ENCODE measurements at regions of chr11 and their contacts with region 1.

Region 1: DNA sequence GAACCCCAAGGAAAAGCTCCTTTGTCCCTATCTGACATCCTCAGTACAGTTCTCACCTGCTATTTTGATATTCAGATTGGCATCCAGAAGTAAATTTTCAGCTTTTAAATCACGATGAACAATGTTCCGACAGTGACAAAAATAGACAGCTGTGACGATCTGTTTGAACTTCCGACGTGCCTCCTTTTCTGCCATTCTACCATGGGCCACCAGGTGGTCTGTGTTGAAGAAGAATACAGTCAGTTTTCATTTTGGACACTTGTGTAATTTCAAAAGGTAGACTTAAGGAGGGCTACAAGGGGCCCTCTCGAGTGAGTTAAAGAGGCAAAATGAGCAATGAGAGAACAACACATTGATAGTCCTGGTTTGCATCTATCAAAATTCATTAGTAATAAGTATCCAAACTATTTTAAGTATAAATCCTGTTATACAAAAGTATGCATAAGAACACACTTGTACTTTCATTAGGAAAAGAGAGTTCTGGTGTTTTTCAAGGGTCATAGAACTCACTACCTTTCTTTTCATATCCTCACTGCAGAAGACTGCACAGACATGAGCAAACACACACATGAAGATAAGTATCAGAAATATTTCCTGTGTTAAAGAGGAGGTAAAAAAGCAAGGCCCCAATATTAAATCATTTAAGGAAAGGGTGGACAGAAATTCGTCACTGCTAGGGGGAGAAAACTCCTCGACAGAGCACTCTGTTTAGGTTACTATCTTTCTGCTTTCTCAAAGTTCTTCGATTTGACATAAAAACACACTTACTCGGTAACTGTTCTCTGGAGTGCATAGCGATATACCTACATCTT is 89.9 kb upstream of the APOA1 start:
- DNase-seq: peak in 34 of 35 experiments; percentile 20 to 75 (median 52)
- ATAC-seq: peak in 3 of 4 experiments; percentile 20 to 38 (median 31)
- H3K4me3 ChIP-seq: no peak overlapping the region
- H3K4me3 Mint-ChIP-seq: peak overlapping the region; percentile 39 to 66 (median 45)
- H3K27ac ChIP-seq: peak overlapping the region; percentile 96
- H3K27ac Mint-ChIP-seq: peak overlapping the region; percentile 97
- H3K4me1 ChIP-seq: peaks cover 65 to 71% of the 10 kb centered on the region in 2 experiments
- H3K4me1 Mint-ChIP-seq: peaks cover 81 to 92% (median 87%) of the 10 kb centered on the region in 3 donors
- H3K27me3 ChIP-seq: no peaks in the 10 kb centered on the region
- H3K27me3 Mint-ChIP-seq: no peaks in the 10 kb centered on the region

Region 2: DNA sequence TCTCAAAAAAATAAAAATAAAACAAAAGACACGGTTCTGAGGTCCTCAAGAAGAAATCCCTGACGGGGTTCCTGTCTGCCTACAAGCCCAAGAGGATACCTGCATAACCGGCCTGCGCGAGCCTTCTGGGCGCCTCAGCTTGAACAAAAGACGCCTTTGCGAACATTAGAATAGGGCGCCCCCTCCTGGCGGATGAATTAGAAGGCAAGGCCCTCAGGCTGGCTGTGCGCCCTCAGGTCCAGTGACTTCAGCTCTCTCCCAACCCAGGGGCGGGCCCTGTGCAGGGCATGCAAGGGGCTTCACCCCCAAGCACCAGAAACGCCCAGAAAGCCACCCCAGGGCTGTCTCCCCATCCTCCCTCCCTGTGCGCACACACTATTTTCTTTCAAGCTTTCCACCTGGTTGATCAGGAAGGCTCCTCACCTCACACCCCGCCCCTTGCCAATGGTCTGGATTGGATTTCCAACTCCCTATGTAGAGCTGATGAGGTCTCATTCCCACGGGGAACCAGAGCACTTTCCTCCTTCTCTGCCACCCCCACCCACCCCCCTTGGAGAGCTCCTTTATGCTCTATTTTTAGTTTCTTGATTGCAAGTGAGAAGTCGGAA is 427.9 kb before region 1 on chr11:
- CTCF ChIA-PET with region 1: no interaction called
- POLR2A ChIA-PET with region 1: no interaction called
- DNase-seq: peak in 9 of 35 experiments; percentile 1 to 14 (median 5)
- ATAC-seq: no peak
- H3K4me3 ChIP-seq: no peak overlapping the region
- H3K4me3 Mint-ChIP-seq: no peak overlapping the region
- H3K27ac ChIP-seq: no peak overlapping the region
- H3K27ac Mint-ChIP-seq: no peak overlapping the region
- H3K4me1 ChIP-seq: no peaks in the 10 kb centered on the region
- H3K4me1 Mint-ChIP-seq: peaks cover 0 to 5% (median 0%) of the 10 kb centered on the region in 3 donors
- H3K27me3 ChIP-seq: peaks cover 7 to 38% of the 10 kb centered on the region in 2 experiments
- H3K27me3 Mint-ChIP-seq: peaks cover 35 to 47% of the 10 kb centered on the region in 2 donors

Region 3: DNA sequence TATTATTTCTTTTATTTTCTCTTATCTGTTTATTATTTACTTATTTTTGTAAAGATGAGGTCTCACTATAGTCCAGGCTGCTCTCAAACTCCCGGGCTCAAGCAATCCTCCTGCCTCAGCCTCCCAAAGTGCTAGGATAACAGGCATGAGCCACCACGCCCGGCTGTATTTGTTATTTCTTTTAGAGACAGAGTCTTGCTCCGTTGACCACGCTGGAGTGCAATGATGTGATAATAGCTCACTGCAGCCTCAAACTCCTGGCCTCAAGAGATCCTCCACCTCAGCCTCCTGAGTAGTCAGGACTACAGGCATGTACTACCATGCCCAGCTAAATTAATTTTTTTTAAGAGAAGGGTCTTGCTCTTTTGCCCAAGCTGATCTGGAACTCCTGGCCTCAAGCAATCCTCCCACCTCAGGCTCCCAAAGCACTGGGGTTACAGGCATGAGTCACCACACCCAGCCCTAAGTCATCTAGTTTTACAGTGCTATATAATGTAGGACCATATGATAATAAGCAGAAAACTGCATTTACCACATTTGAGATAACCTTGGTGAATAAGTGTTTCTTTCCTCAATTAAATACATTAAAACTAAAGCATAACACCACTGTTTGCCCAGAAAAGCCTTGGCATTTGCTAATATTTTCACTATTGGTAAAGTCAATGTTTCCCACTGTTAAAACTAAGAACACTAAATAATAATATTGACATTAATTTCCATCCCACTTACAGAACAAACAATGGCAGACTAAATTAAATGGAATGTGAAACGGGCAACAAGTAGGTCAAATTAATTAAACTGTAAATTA is 43.3 kb after region 1 on chr11:
- CTCF ChIA-PET with region 1: no interaction called
- POLR2A ChIA-PET with region 1: no interaction called
- DNase-seq: no peak
- ATAC-seq: no peak
- H3K4me3 ChIP-seq: no peak overlapping the region
- H3K4me3 Mint-ChIP-seq: no peak overlapping the region
- H3K27ac ChIP-seq: no peak overlapping the region
- H3K27ac Mint-ChIP-seq: no peak overlapping the region
- H3K4me1 ChIP-seq: peaks cover 0 to 8% of the 10 kb centered on the region in 2 experiments
- H3K4me1 Mint-ChIP-seq: peaks cover 35 to 50% (median 40%) of the 10 kb centered on the region in 3 donors
- H3K27me3 ChIP-seq: no peaks in the 10 kb centered on the region
- H3K27me3 Mint-ChIP-seq: no peaks in the 10 kb centered on the region

Region 4: DNA sequence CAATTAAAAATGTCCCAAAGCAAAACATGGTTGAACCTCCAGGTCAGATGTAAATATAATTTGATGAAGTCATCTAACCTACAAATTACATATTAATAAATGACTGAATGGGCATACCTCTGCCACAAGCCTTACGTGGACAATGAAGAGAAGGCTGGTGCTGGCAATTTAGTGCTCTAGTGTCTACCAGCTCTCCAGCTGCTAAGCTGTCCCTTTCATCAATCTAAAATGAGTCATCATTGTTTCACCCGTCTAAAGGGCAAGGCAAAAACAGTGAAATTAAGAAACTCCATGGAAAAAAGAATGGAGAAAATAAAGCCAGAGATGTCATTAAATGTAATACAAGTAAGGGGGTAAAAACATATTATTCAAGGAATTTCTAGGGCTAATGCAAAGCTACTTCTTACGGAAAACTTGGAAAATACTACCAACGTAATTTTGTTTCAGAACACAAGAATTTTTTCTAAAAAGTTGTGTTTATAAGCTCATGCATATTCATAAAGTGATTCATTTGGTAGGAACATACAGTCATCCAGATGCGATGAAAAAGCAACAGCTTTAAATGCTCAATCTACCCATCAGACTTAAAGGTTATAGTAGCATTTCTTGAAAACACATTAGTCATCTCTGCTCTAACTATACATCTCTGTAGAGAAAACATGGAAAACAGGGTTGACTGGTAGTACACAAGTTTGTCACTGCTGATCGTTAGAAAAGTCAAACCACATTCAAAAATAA is 99.4 kb after region 1 on chr11:
- CTCF ChIA-PET with region 1: interaction called in 1 of 2 experiments, 5 read pairs
- POLR2A ChIA-PET with region 1: interaction called, 3 to 13 read pairs
- DNase-seq: no peak
- ATAC-seq: peak in 2 of 4 experiments; percentile 43 to 54
- H3K4me3 ChIP-seq: no peak overlapping the region
- H3K4me3 Mint-ChIP-seq: no peak overlapping the region
- H3K27ac ChIP-seq: no peak overlapping the region
- H3K27ac Mint-ChIP-seq: peak overlapping the region; percentile 19 to 71
- H3K4me1 ChIP-seq: peaks cover 11 to 30% of the 10 kb centered on the region in 2 experiments
- H3K4me1 Mint-ChIP-seq: peaks cover 71 to 78% (median 71%) of the 10 kb centered on the region in 3 donors
- H3K27me3 ChIP-seq: no peaks in the 10 kb centered on the region
- H3K27me3 Mint-ChIP-seq: no peaks in the 10 kb centered on the region

Region 5: GRCh38 chr11:117098269-117099232 is 171.2 kb after region 1 on chr11 and contains the start of gene SIK3:
- CTCF ChIA-PET with region 1: interaction called in 1 of 2 experiments, 7 read pairs
- POLR2A ChIA-PET with region 1: interaction called, 3 to 15 read pairs
- DNase-seq: peak; percentile 84 to 98 (median 91)
- ATAC-seq: peak; percentile 80 to 87 (median 82)
- H3K4me3 ChIP-seq: peak within 1 kb of the TSS; percentile 77 to 83
- H3K4me3 Mint-ChIP-seq: peak within 1 kb of the TSS; percentile 86 to 98 (median 95)
- H3K27ac ChIP-seq: peak within 1 kb of the TSS; percentile 99
- H3K27ac Mint-ChIP-seq: peak within 1 kb of the TSS; percentile 95 to 98
- H3K4me1 ChIP-seq: peaks cover 27 to 38% of the 10 kb centered on the region in 2 experiments
- H3K4me1 Mint-ChIP-seq: peaks cover 46 to 58% (median 54%) of the 10 kb centered on the region in 3 donors
- H3K27me3 ChIP-seq: no peaks in the 10 kb centered on the region
- H3K27me3 Mint-ChIP-seq: no peaks in the 10 kb centered on the region
- total RNA-seq, gene SIK3: 56.3 to 78.0 (median 63.8) TPM

Region 6: GRCh38 chr11:117127171-117127901 is 200.0 kb after region 1 on chr11:
- CTCF ChIA-PET with region 1: no interaction called
- POLR2A ChIA-PET with region 1: interaction called in 1 of 2 experiments, 10 read pairs
- DNase-seq: no peak
- ATAC-seq: no peak
- H3K4me3 ChIP-seq: no peak overlapping the region
- H3K4me3 Mint-ChIP-seq: no peak overlapping the region
- H3K27ac ChIP-seq: no peak overlapping the region
- H3K27ac Mint-ChIP-seq: no peak overlapping the region
- H3K4me1 ChIP-seq: no peaks in the 10 kb centered on the region
- H3K4me1 Mint-ChIP-seq: no peaks in the 10 kb centered on the region
- H3K27me3 ChIP-seq: no peaks in the 10 kb centered on the region
- H3K27me3 Mint-ChIP-seq: peaks cover 0 to 2% of the 10 kb centered on the region in 2 donors

Region 7: DNA sequence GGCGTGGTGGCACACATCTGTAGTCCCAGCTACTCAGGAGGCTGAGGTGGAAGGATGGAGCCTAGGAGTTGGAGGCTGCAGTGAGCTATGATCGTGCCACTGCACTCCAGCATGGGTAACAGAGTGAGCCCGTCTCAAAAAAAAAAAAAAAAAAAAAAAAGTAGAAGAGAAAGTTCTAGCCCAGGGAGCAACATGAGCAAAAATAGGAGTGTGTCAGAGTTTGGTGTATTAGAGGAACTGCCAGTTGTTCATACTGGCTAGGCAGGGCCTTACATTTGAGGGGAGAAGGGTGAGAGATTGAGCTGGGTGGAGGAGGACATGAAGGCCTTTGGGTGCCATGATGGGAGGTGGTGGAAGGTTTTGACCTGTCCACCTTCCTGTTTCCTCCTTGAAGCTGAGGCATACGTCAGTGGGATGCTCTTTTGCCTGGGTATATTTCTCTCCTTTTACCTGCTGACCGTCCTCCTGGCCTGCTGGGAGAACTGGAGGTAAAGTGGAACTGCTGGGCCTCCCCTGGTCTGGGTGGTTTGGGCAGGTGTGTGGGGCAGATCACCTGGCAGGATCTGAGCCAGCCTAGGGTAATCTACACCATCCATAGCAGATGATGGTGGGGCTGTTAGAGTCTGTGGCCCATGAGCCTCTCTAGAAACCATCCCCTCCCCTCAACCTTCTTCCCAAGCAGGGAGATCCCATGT is 258.5 kb after region 1 on chr11:
- CTCF ChIA-PET with region 1: no interaction called
- POLR2A ChIA-PET with region 1: no interaction called
- DNase-seq: no peak
- ATAC-seq: no peak
- H3K4me3 ChIP-seq: no peak overlapping the region
- H3K4me3 Mint-ChIP-seq: no peak overlapping the region
- H3K27ac ChIP-seq: no peak overlapping the region
- H3K27ac Mint-ChIP-seq: no peak overlapping the region
- H3K4me1 ChIP-seq: peaks cover 1 to 13% of the 10 kb centered on the region in 2 experiments
- H3K4me1 Mint-ChIP-seq: peaks cover 3 to 11% (median 5%) of the 10 kb centered on the region in 3 donors
- H3K27me3 ChIP-seq: no peaks in the 10 kb centered on the region
- H3K27me3 Mint-ChIP-seq: no peaks in the 10 kb centered on the region

Measured in T-cell (primary cell).